ENCODE measurements at regions of chr9 and their contacts with region 1.

Region 1: DNA sequence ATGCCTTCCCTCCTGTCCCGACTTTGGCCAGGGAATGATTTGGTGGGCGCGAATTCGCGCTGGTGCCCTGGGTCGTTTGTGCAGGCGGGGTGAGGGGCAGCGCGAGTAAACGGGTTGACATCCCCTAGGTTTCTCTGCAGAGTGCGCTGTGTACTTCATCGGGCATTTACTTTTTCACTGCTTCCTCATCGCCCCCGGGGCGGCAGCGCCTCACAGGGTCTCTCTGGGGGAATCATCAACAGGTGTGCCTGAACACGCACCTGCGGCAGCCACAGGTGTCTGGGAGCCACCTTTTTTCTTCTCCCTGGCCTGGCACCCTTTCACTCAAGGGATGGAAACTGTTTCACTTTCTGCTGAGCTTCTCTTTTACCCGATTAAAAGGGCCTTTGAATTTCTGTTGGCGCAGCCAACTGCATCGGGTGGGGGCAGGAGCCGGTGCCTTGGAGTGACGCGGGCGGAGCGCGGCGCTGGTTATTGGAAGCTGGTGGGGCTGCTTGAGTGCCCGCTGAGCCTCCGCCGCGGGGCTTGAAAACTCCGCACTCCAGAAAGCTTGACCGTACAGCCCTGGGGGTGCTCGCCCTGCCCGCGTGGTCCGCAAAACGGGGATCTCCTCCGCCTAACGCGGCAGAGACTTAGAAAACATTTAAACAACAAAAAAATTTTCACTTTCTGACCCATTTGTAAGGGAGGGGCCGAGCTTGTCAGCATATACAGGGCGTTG is 52.1 kb upstream of the TJP2 start:
- DNase-seq: peak; percentile 29
- ATAC-seq: peak; percentile 49
- H3K4me3 ChIP-seq: peak overlapping the region; percentile 75 to 92 (median 91)
- H3K27ac ChIP-seq: peak overlapping the region; percentile 99
- H3K4me1 ChIP-seq: peaks cover 29% of the 10 kb centered on the region
- H3K27me3 ChIP-seq: no peaks in the 10 kb centered on the region; a peak in 1 of 5 replicates
- CTCF ChIP-seq: no peak; the same call in 1 of the 2 replicates
- EP300 ChIP-seq: no peak
- POLR2A ChIP-seq: peak in 1 of 2 experiments; percentile 32; a peak in 1 of 4 replicates
- RAD21 ChIP-seq: no peak

Region 2: DNA sequence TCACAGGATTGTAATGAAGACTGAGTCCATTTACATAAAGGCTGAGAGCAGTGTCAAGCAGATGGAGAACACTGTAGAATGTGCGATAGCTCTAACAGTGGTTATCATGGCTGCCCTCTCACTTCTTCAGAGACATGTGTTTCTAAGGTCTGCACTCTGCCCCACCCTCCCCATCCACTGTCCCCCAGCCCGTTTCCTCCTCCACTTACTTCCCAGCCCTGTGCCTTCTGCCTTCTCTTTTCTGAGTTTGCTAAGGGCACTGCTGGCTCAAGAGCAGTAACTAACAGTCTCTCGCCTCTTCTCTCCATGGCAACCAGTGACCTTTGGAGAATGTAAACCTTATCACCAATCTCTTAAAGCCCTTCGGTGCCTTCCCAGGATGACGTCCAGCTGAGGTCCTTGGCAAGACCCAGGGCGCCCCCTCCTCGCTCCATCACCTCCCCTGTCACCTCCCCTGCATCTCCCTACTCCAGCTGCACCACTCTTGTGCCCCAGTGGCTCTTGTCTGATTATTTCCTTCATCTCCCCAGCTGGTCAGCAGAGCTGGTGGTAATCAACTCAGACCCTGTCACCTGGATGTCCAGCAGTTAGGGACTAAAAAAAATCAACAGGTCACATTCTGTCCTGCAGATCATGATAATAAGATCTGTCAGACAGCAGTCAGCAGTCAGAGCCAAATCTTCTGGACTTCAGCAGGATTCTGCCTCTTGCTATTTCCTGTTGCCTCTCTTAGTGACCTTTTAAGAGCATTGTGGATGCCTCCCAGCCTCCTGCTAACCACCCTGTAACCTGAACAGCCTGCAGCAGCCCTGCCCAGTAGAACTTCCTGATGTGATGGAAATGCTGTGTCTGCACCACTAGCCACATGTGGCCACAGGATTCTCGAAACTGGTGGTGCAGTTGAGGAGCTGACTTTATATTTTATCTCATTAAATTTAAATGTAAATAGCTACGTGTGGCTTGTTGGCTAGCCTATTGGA is 77.5 kb before region 1 on chr9:
- CTCF ChIA-PET with region 1: no interaction called
- POLR2A ChIA-PET with region 1: no interaction called
- in situ Hi-C with region 1: no loop called
- intact Hi-C with region 1: no loop called
- DNase-seq: no peak
- ATAC-seq: no peak; the same call in 2 of the 3 replicates
- H3K4me3 ChIP-seq: no peak overlapping the region
- H3K27ac ChIP-seq: no peak overlapping the region
- H3K4me1 ChIP-seq: peaks cover 49% of the 10 kb centered on the region
- H3K27me3 ChIP-seq: no peaks in the 10 kb centered on the region
- CTCF ChIP-seq: no peak
- EP300 ChIP-seq: no peak
- POLR2A ChIP-seq: no peak
- RAD21 ChIP-seq: no peak

Region 3: DNA sequence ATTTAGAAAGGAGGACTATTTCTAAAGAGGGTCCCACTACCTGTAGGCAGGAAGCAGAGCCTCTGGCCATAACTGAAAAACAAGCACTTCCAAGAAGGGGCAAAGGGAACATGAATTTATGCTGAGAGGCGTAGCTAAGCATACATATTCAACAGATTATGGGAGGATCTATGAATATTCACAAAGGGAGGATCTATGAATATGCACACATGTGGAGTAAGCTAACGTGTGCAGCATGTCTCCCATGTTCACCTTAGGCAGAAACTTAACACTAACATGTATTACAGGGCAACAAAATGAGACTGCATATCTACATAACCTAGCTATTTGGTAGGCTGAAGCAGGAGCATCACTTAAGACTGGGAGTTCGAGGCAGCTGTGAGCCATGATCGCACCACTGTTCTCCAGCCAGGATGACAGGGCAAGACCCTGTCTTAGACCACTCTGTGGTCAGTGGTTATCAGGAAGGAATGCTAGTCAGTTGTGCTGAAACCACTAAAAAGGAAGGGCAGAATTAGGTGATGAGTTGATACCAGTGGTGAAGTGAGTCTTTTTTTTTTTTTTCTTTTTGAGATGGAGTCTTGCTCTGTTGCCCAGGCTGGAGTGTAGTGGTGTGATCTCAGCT is 65.7 kb before region 1 on chr9:
- CTCF ChIA-PET with region 1: no interaction called
- POLR2A ChIA-PET with region 1: no interaction called
- in situ Hi-C with region 1: no loop called
- intact Hi-C with region 1: loop called (anchors 2 kb)
- DNase-seq: no peak
- ATAC-seq: no peak
- H3K4me3 ChIP-seq: no peak overlapping the region
- H3K27ac ChIP-seq: no peak overlapping the region
- H3K4me1 ChIP-seq: no peaks in the 10 kb centered on the region
- H3K27me3 ChIP-seq: no peaks in the 10 kb centered on the region
- CTCF ChIP-seq: no peak
- EP300 ChIP-seq: no peak
- POLR2A ChIP-seq: no peak
- RAD21 ChIP-seq: no peak

Region 4: GRCh38 chr9:69104830-69105527 is 17.0 kb before region 1 on chr9:
- CTCF ChIA-PET with region 1: no interaction called
- POLR2A ChIA-PET with region 1: interaction called, 41 read pairs
- in situ Hi-C with region 1: no loop called
- intact Hi-C with region 1: loop called (anchors 2 kb)
- DNase-seq: peak; percentile 86
- ATAC-seq: peak; percentile 90
- H3K4me3 ChIP-seq: peak overlapping the region; percentile 33 to 69 (median 48)
- H3K27ac ChIP-seq: peak overlapping the region; percentile 100
- H3K4me1 ChIP-seq: peaks cover 63% of the 10 kb centered on the region
- H3K27me3 ChIP-seq: no peaks in the 10 kb centered on the region
- CTCF ChIP-seq: no peak
- EP300 ChIP-seq: peak in 1 of 2 experiments; percentile 78; a peak in 2 of 4 replicates
- POLR2A ChIP-seq: peak; percentile 52 to 67; a peak in 3 of 4 replicates
- RAD21 ChIP-seq: no peak

Region 5: GRCh38 chr9:69174616-69175463 is 52.9 kb after region 1 on chr9:
- CTCF ChIA-PET with region 1: no interaction called
- POLR2A ChIA-PET with region 1: interaction called, 15 read pairs
- in situ Hi-C with region 1: no loop called
- intact Hi-C with region 1: loop called (anchors 5 kb)
- DNase-seq: peak; percentile 48
- ATAC-seq: peak; percentile 40
- H3K4me3 ChIP-seq: peak overlapping the region; percentile 66 to 73 (median 67)
- H3K27ac ChIP-seq: peak overlapping the region; percentile 50
- H3K4me1 ChIP-seq: peaks cover 91% of the 10 kb centered on the region
- H3K27me3 ChIP-seq: no peaks in the 10 kb centered on the region
- CTCF ChIP-seq: no peak
- EP300 ChIP-seq: no peak
- POLR2A ChIP-seq: no peak; a peak in 2 of 4 replicates
- RAD21 ChIP-seq: no peak

Region 6: DNA sequence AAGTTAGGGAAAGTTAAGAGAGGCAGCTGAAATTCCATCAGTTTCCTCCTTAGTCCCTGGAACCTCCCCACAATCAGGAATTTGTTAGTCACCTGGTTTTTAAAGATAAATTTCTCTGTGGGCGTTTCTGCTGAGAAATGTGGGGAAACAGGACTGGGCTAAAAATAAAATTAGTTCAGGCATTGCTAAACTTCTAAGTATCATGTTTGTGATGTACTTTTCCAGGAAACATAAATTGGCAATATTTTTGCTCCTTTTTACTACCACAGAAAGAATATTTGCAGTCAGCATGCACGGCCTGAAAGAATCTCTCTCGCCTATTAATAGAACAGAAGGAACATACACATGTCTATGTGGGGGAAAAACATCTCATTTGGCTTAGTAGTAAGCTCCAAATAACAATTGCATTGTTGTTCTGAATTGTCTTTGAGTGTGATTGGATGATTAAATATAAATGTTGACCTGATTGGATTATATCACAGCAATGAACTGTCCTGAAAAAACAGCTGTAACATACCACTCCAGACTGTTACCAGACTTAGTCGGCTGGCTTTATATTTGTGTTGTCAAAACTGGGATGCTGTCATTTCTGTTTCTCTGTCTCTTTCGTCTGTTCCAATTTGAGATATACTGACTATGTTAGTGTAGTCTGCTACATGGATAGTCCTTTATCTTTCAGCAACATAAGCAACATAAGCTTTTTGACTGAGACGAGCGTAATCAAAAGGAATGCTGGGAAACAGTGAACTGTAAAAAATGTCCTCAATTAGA is 65.0 kb after region 1 on chr9:
- CTCF ChIA-PET with region 1: no interaction called
- POLR2A ChIA-PET with region 1: interaction called, 16 read pairs
- in situ Hi-C with region 1: no loop called
- intact Hi-C with region 1: loop called (anchors 2 kb)
- DNase-seq: no peak
- ATAC-seq: no peak
- H3K4me3 ChIP-seq: no peak overlapping the region; a peak in 1 of 6 replicates
- H3K27ac ChIP-seq: peak overlapping the region; percentile 82
- H3K4me1 ChIP-seq: peaks cover 99% of the 10 kb centered on the region
- H3K27me3 ChIP-seq: no peaks in the 10 kb centered on the region
- CTCF ChIP-seq: no peak
- EP300 ChIP-seq: no peak
- POLR2A ChIP-seq: no peak
- RAD21 ChIP-seq: no peak

Region 7: GRCh38 chr9:69412741-69413150 is 290.8 kb after region 1 on chr9:
- CTCF ChIA-PET with region 1: no interaction called
- POLR2A ChIA-PET with region 1: no interaction called
- in situ Hi-C with region 1: no loop called
- intact Hi-C with region 1: no loop called
- DNase-seq: peak; percentile 39
- ATAC-seq: peak; percentile 100
- H3K4me3 ChIP-seq: no peak overlapping the region
- H3K27ac ChIP-seq: no peak overlapping the region
- H3K4me1 ChIP-seq: no peaks in the 10 kb centered on the region
- H3K27me3 ChIP-seq: peaks cover 0 to 25% of the 10 kb centered on the region in 2 experiments; a peak in 2 of 5 replicates
- CTCF ChIP-seq: peak; percentile 84
- EP300 ChIP-seq: no peak
- POLR2A ChIP-seq: no peak
- RAD21 ChIP-seq: peak; percentile 68